ENCODE measurements at regions of chr12 and their contacts with region 1.

Region 1: DNA sequence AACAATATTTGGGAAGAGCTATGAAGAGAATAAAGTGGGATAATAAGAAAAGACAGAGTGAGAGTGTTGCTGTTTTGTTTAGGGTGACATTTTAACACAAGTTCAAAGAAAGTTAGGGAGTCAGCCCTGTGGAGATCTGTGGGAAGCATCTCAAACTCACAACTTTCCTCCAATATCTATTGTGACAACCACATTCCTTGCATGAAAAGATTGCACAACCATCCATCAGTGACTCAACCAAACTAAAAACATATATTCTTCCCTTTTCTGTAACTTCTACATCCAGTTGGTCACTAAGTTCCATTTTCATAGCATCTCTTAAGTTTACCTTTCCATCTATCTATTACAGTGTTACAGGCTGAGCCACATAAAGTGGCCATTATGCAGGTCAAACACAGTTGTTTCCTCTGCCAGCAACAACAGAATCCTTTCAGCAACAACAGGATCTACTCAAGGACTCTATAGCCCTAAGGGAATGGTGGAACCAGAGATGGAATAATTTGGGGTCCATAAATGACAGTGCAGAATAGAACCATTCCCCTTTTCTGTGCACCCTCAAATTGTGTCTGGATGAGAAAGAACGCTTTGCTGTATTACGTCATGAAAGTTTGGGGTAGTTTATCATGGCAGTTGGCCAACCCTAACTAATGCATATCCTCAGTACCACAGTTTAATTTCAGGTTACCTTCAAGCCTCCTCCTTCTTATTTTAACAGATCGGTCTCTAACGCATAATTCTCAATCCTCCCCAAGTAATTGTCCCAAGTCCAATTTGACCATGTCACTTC is 118.8 kb downstream of the ST8SIA1 start:
- DNase-seq: no peak
- H3K4me3 ChIP-seq: no peak overlapping the region
- H3K27ac ChIP-seq: no peak overlapping the region
- H3K4me1 ChIP-seq: no peaks in the 10 kb centered on the region
- H3K27me3 ChIP-seq: no peaks in the 10 kb centered on the region
- CTCF ChIP-seq: no peak
- POLR2A ChIP-seq: no peak

Region 2: GRCh38 chr12:22164139-22164538 is 51.5 kb before region 1 on chr12:
- CTCF ChIA-PET with region 1: no interaction called
- POLR2A ChIA-PET with region 1: no interaction called
- dilution Hi-C with region 1: no loop called
- intact Hi-C with region 1: loop called (anchors 1 kb)
- DNase-seq: no peak
- H3K4me3 ChIP-seq: no peak overlapping the region
- H3K27ac ChIP-seq: no peak overlapping the region
- H3K4me1 ChIP-seq: no peaks in the 10 kb centered on the region
- H3K27me3 ChIP-seq: no peaks in the 10 kb centered on the region
- CTCF ChIP-seq: no peak
- POLR2A ChIP-seq: no peak

Region 3: GRCh38 chr12:22684140-22685118 is 468.8 kb after region 1 on chr12:
- CTCF ChIA-PET with region 1: no interaction called
- POLR2A ChIA-PET with region 1: no interaction called
- dilution Hi-C with region 1: no loop called
- intact Hi-C with region 1: no loop called
- DNase-seq: peak; percentile 71
- H3K4me3 ChIP-seq: no peak overlapping the region
- H3K27ac ChIP-seq: no peak overlapping the region
- H3K4me1 ChIP-seq: peaks cover 18% of the 10 kb centered on the region
- H3K27me3 ChIP-seq: no peaks in the 10 kb centered on the region
- CTCF ChIP-seq: peak; percentile 33 to 39
- POLR2A ChIP-seq: no peak

Measured in endothelial cell of umbilical vein (primary cell).